ENCODE measurements at regions of chr2 and their contacts with region 1.

Region 1: GRCh38 chr2:113240150-113240862 is 38.4 kb downstream of the PAX8 start:
- DNase-seq: peak; percentile 95
- ATAC-seq: peak; percentile 87

Region 2: DNA sequence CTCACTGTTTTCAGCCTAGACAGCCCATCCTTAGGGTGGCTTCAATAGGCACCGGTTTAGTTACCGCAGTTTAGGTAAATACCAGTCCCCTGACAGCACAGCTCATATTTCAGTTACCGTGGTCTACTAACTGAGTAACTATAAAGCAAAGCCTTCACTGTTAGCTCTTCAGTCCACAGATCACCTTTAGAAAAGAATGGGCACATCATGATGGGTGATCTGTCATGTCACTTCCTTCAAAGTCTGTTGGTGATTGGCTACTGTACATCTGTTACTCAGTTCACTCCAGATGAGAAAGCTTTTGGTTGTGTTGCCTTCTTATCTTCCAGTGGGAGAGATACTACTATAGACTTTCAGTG is 573.6 kb before region 1 on chr2:
- intact Hi-C with region 1: no loop called
- DNase-seq: no peak
- ATAC-seq: no peak

Region 3: DNA sequence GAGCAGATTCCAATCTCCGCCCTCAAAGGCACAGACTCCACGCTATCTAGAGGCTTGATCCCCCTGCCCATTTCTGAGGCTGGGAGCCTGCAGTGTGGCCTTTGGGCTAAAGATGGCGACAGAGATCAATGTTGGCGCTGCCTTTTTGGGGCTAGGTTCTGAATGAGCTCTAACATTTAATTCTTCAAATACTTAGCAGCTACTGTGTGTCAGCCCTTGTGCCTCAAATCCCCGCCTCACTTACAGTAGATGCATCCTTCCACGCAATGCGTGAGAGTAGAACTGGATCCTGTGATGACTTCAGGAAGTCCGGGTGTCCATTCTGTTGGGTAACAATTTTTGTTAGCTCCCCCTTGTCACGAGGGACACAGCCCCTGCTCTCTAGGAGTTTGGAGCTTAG is 160.2 kb before region 1 on chr2:
- intact Hi-C with region 1: no loop called
- DNase-seq: no peak
- ATAC-seq: peak; percentile 68

Region 4: GRCh38 chr2:113203901-113204519 is 36.3 kb before region 1 on chr2:
- intact Hi-C with region 1: loop called (anchors 5 kb)
- DNase-seq: peak; percentile 75
- ATAC-seq: peak; percentile 82